Naive thymus-derived CD4-positive, alpha-beta T cell (primary cell): ENCODE measurements at regions of chr10 and their contacts with region 1.

Region 1: GRCh38 chr10:97572214-97572989 is at the start of gene ANKRD2:
- DNase-seq: peak in 8 of 9 donors; percentile 2 to 47 (median 34)
- ATAC-seq: peak; percentile 82
- H3K4me3 ChIP-seq: no peak within 1 kb of the TSS
- H3K4me3 Mint-ChIP-seq: no peak within 1 kb of the TSS
- H3K27ac ChIP-seq: no peak within 1 kb of the TSS
- H3K27ac Mint-ChIP-seq: no peak within 1 kb of the TSS
- H3K4me1 ChIP-seq: no peaks in the 10 kb centered on the region
- H3K4me1 Mint-ChIP-seq: peaks cover 0 to 3% (median 0%) of the 10 kb centered on the region in 7 donors
- H3K27me3 ChIP-seq: no peaks in the 10 kb centered on the region
- H3K27me3 Mint-ChIP-seq: peaks cover 0 to 1% (median 0%) of the 10 kb centered on the region in 5 donors
- total RNA-seq, gene ANKRD2: 0.22 TPM in 1 of 5 experiments, not detected in the others

Region 2: DNA sequence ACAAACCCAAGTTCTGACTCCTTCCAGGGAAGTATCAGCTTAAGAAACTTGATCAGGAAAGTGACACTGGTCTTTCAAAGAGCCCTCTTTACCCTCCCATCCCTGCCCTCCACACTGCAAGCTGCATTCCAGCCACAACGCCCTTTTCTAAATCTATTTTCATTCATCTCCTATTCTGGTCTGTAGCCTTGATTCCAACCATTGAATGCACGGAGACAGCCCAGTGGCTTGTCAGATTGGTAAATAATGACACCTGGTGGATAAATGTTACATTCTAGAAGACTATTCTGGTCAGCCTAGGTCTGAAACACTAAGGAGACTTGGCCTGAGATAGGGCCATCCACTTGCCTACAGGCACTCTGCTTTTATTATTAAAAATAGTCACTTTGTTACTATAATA is 40.0 kb after region 1 on chr10:
- CTCF ChIA-PET with region 1: interaction called, 3 read pairs
- POLR2A ChIA-PET with region 1: no interaction called
- intact Hi-C with region 1: loop called in 1 of 2 experiments (anchors 5 kb)
- DNase-seq: no peak
- ATAC-seq: peak; percentile 47
- H3K4me3 ChIP-seq: no peak overlapping the region
- H3K4me3 Mint-ChIP-seq: no peak overlapping the region
- H3K27ac ChIP-seq: no peak overlapping the region
- H3K27ac Mint-ChIP-seq: no peak overlapping the region
- H3K4me1 ChIP-seq: no peaks in the 10 kb centered on the region
- H3K4me1 Mint-ChIP-seq: peaks cover 0 to 1% (median 0%) of the 10 kb centered on the region in 7 donors
- H3K27me3 ChIP-seq: no peaks in the 10 kb centered on the region
- H3K27me3 Mint-ChIP-seq: no peaks in the 10 kb centered on the region

Region 3: DNA sequence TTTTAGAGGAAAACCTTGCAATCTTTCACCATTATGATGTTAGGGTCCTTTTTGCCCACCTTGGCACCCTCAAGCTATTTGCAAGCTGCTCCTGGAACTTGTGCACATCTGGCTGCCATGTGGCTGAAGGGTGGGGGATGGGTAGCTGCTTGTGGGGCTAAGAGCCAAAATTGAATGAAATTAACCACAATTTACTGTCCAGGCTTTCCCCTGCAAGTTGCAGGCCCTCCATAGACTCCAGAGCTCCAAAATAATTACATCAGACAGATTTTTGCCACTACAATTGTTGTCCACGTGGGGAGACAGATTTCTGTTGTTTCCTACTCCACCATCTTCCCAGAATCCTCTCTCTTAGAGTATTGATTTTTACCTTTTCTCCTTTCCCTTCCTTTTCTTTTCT is 87.2 kb after region 1 on chr10:
- CTCF ChIA-PET with region 1: no interaction called
- POLR2A ChIA-PET with region 1: no interaction called
- intact Hi-C with region 1: no loop called
- DNase-seq: no peak
- ATAC-seq: no peak
- H3K4me3 ChIP-seq: no peak overlapping the region
- H3K4me3 Mint-ChIP-seq: no peak overlapping the region
- H3K27ac ChIP-seq: no peak overlapping the region
- H3K27ac Mint-ChIP-seq: no peak overlapping the region
- H3K4me1 ChIP-seq: no peaks in the 10 kb centered on the region
- H3K4me1 Mint-ChIP-seq: peaks cover 0 to 2% (median 0%) of the 10 kb centered on the region in 7 donors
- H3K27me3 ChIP-seq: no peaks in the 10 kb centered on the region
- H3K27me3 Mint-ChIP-seq: no peaks in the 10 kb centered on the region